Left cardiac atrium (tissue), 4 donors: ENCODE measurements at regions of chr17 and their contacts with region 1.

Region 1: DNA sequence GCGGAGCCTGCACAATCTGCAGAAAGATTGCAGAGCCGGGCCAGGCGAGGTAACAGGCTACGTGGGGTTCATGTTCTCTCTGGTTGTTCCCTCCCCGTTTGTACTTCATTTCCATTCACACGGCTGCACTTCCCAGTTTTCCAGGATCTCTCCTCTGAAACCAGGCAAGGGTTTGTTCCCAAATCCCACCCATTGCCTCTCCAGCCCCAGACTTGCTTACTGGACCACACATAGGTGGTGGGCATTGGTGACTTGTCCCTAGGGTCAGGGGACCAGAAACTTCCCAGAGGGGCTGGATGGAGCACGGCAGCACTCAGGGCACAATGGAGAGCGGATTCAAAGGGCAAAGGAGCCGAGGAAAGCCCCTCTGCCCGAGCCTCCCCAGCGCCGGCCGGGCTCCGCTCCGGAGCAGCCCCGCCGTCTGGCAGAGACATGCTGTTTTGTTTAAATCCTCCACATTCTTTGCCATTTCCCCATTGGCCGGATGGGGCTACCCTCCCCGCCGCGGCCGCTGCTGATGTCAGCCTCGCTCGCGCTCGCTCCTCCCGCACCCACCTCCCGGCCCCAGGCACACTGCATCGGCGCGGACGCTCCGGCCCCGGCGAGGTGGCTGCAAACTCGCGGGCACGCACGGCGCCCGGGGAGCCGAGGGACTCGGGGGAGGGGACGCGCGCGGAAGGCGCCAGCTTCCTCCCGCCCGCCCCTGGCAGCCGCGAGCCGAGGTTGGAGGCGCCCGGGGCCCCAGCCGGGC is at the start of gene PITPNC1:
- DNase-seq: peak; percentile 90
- ATAC-seq: peak; percentile 82 to 89
- total RNA-seq, gene PITPNC1: 26.2 to 33.7 TPM

Region 2: DNA sequence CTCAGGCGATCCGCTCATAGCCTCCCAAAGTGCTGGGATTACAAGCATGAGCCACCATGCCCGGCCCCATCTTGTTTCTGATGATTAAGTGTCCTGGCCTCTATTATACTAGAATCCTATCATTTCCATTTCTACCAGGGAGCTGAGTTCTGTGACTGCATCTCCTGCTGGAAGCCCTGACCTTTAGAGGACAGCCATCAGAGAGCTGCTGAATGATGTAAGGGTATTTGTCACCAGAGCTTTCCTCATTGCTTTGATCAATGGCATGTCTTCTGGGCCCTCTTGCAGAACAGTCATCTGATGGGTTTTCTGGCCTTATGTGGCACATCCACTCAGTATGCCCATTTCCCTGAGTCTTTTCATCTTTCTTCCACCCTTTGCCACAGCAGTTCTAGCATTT is 50.5 kb before region 1 on chr17:
- intact Hi-C with region 1: no loop called
- DNase-seq: no peak
- ATAC-seq: no peak

Region 3: GRCh38 chr17:67441052-67441927 is 64.4 kb after region 1 on chr17:
- intact Hi-C with region 1: loop called in 1 of 2 experiments (anchors 5 kb)
- DNase-seq: peak; percentile 53
- ATAC-seq: peak; percentile 79 to 89

Region 4: GRCh38 chr17:67475236-67475937 is 98.5 kb after region 1 on chr17:
- intact Hi-C with region 1: loop called (anchors 2 to 5 kb)
- DNase-seq: peak; percentile 84
- ATAC-seq: peak; percentile 78 to 80

Region 5: DNA sequence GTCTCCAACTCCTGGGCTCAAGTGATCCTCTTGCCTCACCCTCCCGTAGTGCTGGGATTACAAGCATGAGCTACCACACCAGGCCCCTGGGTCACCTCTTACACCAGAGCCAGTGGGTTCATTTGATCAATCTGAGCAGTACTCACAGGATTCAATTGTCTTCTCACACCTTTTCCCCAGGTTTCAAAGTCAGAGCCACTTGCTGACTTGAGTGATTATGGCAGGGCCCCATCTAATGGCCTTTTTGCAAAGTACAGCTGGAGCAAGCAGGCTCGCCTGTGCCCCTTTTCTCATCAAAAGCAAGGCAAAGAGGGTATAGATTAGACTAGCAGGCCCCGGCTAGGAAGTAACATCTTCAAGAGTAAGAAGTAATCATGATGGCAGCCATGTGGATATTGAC is 226.0 kb after region 1 on chr17:
- intact Hi-C with region 1: loop called in 1 of 2 experiments (anchors 10 kb)
- DNase-seq: no peak
- ATAC-seq: peak; percentile 23 to 24

Region 6: DNA sequence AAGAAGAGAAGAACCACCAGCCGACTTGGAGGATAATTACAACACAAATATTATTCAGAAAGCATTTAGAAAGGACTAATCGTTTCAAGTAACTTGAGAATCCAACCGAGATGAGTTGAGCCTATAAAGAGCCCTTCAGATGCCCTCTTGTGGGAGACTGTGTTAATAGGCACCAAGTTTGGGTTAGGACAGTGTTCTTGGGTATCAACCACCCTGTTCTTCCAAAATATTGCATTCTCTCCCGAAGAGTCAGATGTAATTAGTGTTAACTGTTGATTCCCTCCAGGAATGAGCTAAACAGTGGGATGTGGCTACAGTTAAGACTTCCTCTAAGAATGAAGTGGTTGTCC is 253.0 kb after region 1 on chr17:
- intact Hi-C with region 1: loop called in 1 of 2 experiments (anchors 2 kb)
- DNase-seq: no peak
- ATAC-seq: peak; percentile 55 to 69

Region 7: DNA sequence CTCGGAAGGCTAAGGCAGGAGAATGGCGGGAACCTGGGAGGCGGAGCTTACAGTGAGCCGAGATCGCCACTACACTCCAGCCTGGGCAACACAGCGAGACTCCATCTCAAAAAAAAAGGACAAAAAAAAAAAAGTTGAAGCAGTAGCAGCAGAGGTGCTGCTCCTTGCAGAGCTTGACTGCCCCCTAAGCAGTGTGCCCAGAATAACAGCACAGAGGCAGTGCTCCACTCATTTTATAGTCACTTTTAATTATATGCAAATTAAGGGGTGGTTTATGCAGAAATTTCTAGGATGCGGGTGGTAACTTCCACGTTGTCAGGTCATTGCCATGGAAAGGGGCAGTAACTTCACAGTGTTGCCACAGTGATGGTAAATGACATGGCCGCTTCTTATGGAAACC is 286.5 kb after region 1 on chr17:
- intact Hi-C with region 1: no loop called
- DNase-seq: no peak
- ATAC-seq: no peak

Region 8: DNA sequence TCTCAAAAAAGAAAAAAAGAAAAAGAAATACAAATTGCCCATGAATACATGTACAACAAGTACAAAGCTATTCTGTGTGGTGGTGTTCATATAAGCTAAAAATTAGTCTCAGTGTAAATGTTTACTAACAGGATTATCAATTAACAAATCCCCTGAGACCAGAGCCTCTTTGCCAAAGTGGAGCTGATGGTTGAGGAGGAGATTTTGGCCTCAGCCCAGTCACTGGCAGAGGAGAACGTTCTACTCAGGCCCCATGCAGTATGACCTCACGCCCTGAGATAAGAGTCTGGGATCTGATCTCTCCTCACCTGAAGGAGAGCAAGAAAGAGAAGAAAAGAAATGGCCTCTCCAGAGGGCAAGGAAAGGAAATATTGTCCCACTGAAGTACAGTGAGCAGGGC is 305.3 kb after region 1 on chr17:
- intact Hi-C with region 1: loop called in 1 of 2 experiments (anchors 5 kb)
- DNase-seq: no peak
- ATAC-seq: no peak

Region 9: GRCh38 chr17:67689534-67690177 is 312.7 kb after region 1 on chr17:
- intact Hi-C with region 1: loop called (anchors 2 to 5 kb)
- DNase-seq: peak; percentile 34
- ATAC-seq: peak; percentile 44 to 49